ENCODE measurements at regions of chr1 and their contacts with region 1.

Region 1: DNA sequence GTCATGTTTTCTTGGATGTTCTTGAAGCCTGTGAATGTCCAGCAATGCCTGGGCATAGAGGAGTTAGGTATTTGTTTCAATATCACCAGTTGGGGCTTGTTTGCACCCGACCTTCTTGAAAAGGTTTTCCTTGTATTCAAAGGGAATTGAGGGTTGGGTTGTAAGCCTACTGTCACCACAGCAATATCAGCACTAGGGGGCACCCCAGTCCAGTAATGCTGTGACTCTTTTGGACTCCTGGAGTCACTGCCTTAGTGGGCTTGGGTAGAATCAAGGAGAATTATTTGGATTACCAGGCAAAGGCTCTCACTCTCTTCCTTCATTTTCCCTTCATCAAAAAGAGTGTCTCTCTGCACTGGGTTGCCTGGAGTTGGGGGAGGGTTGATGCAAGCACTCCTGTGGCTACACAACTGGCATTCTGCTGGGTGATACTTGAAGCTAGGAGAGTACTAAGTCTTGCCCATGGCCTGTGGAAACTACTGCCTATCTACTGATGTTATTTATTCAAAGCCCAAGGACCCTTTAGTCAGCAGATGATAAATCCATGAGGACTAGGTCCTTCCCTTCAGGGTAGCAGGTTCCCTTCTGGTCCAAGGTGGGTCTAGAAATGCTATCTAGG is 34.5 kb downstream of the OR10R2 start:
- DNase-seq: peak; percentile 8
- ATAC-seq: peak; percentile 93
- H3K4me3 ChIP-seq: no peak overlapping the region
- H3K27ac ChIP-seq: no peak overlapping the region
- H3K4me1 ChIP-seq: no peaks in the 10 kb centered on the region
- H3K27me3 ChIP-seq: no peaks in the 10 kb centered on the region; a peak in 1 of 4 replicates
- CTCF ChIP-seq: peak; percentile 66 to 72 (median 67)
- EP300 ChIP-seq: no peak
- POLR2A ChIP-seq: no peak
- RAD21 ChIP-seq: peak; percentile 87

Region 2: DNA sequence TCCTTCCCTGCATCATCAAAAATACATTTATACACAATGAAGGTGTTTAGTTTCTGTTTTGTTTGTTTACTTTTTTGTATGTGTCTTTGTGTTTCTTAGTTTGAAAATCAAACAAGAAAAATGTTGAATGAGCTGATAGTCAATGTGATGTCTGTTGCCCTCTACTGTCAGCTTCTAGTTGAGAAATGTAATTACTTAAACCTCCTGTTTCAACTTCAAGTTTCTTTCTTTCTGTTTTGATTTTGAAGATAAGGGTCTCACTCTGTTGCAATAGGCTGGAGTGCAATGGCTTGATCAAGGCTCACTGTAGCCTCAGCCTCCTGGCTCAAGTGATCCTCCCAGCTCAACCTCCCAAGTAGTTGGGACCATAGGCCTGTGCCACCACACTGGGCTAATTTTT is 142.6 kb after region 1 on chr1:
- CTCF ChIA-PET with region 1: interaction called, 16 read pairs
- POLR2A ChIA-PET with region 1: no interaction called
- RAD21 ChIA-PET with region 1: interaction called, 3 read pairs
- SMC1A ChIA-PET with region 1: no interaction called
- in situ Hi-C with region 1: no loop called
- intact Hi-C with region 1: no loop called
- DNase-seq: no peak
- ATAC-seq: peak; percentile 39; the same call in 2 of the 3 replicates
- H3K4me3 ChIP-seq: no peak overlapping the region
- H3K27ac ChIP-seq: no peak overlapping the region
- H3K4me1 ChIP-seq: peaks cover 2% of the 10 kb centered on the region; the same call in 1 of the 2 replicates
- H3K27me3 ChIP-seq: no peaks in the 10 kb centered on the region
- CTCF ChIP-seq: no peak
- EP300 ChIP-seq: no peak
- POLR2A ChIP-seq: no peak
- RAD21 ChIP-seq: 0 out of 2 replicates have a peak, but pooled peaks have one; percentile 21

Region 3: GRCh38 chr1:159089184-159089791 is 582.8 kb after region 1 on chr1:
- CTCF ChIA-PET with region 1: interaction called, 37 read pairs
- POLR2A ChIA-PET with region 1: no interaction called
- RAD21 ChIA-PET with region 1: interaction called, 4 read pairs
- SMC1A ChIA-PET with region 1: interaction called, 3 read pairs
- in situ Hi-C with region 1: no loop called
- intact Hi-C with region 1: loop called (anchors 5 kb)
- DNase-seq: no peak
- ATAC-seq: peak; percentile 83
- H3K4me3 ChIP-seq: no peak overlapping the region
- H3K27ac ChIP-seq: no peak overlapping the region
- H3K4me1 ChIP-seq: no peaks in the 10 kb centered on the region
- H3K27me3 ChIP-seq: 0 out of 4 replicates have a peak, but pooled peaks cover 0 to 2% of the 10 kb centered on the region in 2 experiments
- CTCF ChIP-seq: peak; percentile 58 to 73 (median 71)
- EP300 ChIP-seq: no peak
- POLR2A ChIP-seq: no peak
- RAD21 ChIP-seq: peak; percentile 62

Measured in GM12878 (cell line).